ENCODE measurements at regions of chr6 and their contacts with region 1.

Region 1: GRCh38 chr6:127266178-127266891 is at the start of gene RNF146:
- DNase-seq: peak; percentile 90
- H3K4me3 ChIP-seq: peak within 1 kb of the TSS; percentile 92 to 99 (median 98)
- H3K27ac ChIP-seq: peak within 1 kb of the TSS; percentile 74
- H3K4me1 ChIP-seq: peaks cover 20% of the 10 kb centered on the region
- H3K27me3 ChIP-seq: no peaks in the 10 kb centered on the region
- CTCF ChIP-seq: peak; percentile 67 to 73
- POLR2A ChIP-seq: no peak
- total RNA-seq, gene RNF146: 43.8 and 48.1 TPM in 2 replicates

Region 2: GRCh38 chr6:125995972-125996580 is 1270.3 kb before region 1 on chr6:
- CTCF ChIA-PET with region 1: interaction called, 7 read pairs
- POLR2A ChIA-PET with region 1: no interaction called
- dilution Hi-C with region 1: no loop called
- intact Hi-C with region 1: loop called (anchors 5 kb)
- DNase-seq: peak; percentile 74
- H3K4me3 ChIP-seq: no peak overlapping the region
- H3K27ac ChIP-seq: no peak overlapping the region
- H3K4me1 ChIP-seq: no peaks in the 10 kb centered on the region
- H3K27me3 ChIP-seq: no peaks in the 10 kb centered on the region
- CTCF ChIP-seq: peak; percentile 84 to 97
- POLR2A ChIP-seq: no peak

Region 3: DNA sequence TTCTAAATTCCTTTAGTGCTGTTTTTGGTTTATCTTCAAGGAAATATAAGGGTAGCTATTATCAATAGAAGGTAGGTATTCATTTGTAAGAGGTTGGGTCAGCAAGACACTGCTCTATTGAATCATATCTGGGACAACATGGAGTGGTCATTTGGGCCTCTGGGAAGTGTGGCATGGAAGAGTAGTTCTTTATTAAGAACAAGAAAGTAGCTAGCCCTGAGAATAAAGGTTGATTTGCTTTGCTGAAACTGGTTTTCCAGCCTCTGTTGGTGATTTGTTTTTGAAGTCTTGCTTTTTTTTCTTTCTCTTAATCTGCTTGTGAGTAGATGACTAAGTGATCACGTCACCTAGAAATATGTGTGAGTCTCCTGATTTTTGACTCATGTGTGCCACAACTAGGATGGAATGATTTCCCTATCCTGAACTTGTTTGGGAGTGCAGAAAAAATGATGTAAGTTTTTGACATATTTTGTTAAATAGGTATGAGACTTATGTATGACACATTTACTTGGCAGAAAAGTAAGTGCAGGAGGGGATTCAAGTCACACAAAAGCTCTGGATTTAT is 544.7 kb before region 1 on chr6:
- CTCF ChIA-PET with region 1: no interaction called
- POLR2A ChIA-PET with region 1: no interaction called
- dilution Hi-C with region 1: no loop called
- intact Hi-C with region 1: loop called (anchors 1 kb)
- DNase-seq: peak; percentile 80
- H3K4me3 ChIP-seq: no peak overlapping the region
- H3K27ac ChIP-seq: peak overlapping the region; percentile 72
- H3K4me1 ChIP-seq: peaks cover 14% of the 10 kb centered on the region
- H3K27me3 ChIP-seq: no peaks in the 10 kb centered on the region
- CTCF ChIP-seq: no peak
- POLR2A ChIP-seq: no peak

Region 4: DNA sequence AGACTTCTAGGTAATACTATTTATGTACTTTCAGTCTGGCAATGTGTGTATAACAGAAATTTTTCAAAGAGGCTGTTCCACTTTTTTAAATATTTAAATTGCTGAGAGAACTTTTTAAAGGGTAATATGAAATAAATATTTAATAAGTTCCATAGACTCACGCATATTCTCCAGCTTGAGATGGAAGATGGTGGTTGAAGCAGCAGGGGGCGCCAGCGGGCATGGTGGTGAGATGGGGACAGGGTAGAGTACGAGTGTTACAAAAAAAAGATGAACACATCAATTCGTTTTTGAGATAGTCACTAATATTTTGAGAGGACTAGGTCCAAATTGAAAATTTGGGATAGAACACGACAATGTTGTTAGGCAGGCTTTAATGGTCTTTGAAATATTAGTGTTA is 79.4 kb before region 1 on chr6:
- CTCF ChIA-PET with region 1: interaction called, 115 read pairs
- POLR2A ChIA-PET with region 1: interaction called, 6 read pairs
- dilution Hi-C with region 1: no loop called
- intact Hi-C with region 1: loop called (anchors 2 kb)
- DNase-seq: no peak
- H3K4me3 ChIP-seq: no peak overlapping the region
- H3K27ac ChIP-seq: no peak overlapping the region
- H3K4me1 ChIP-seq: no peaks in the 10 kb centered on the region
- H3K27me3 ChIP-seq: no peaks in the 10 kb centered on the region
- CTCF ChIP-seq: peak in 1 of 2 donors; percentile 24
- POLR2A ChIP-seq: no peak

Region 5: GRCh38 chr6:127216810-127217789 is 49.2 kb before region 1 on chr6:
- CTCF ChIA-PET with region 1: interaction called, 12 read pairs
- POLR2A ChIA-PET with region 1: no interaction called
- dilution Hi-C with region 1: no loop called
- intact Hi-C with region 1: no loop called
- DNase-seq: peak; percentile 50
- H3K4me3 ChIP-seq: no peak overlapping the region
- H3K27ac ChIP-seq: no peak overlapping the region
- H3K4me1 ChIP-seq: peaks cover 14% of the 10 kb centered on the region
- H3K27me3 ChIP-seq: no peaks in the 10 kb centered on the region
- CTCF ChIP-seq: no peak
- POLR2A ChIP-seq: no peak

Region 6: GRCh38 chr6:127302728-127303660 is 36.7 kb after region 1 on chr6:
- CTCF ChIA-PET with region 1: interaction called, 17 read pairs
- POLR2A ChIA-PET with region 1: interaction called, 3 read pairs
- dilution Hi-C with region 1: no loop called
- intact Hi-C with region 1: loop called (anchors 2 kb)
- DNase-seq: peak; percentile 81
- H3K4me3 ChIP-seq: no peak overlapping the region
- H3K27ac ChIP-seq: no peak overlapping the region
- H3K4me1 ChIP-seq: peaks cover 29% of the 10 kb centered on the region
- H3K27me3 ChIP-seq: no peaks in the 10 kb centered on the region
- CTCF ChIP-seq: peak; percentile 43 to 54
- POLR2A ChIP-seq: no peak

Measured in endothelial cell of umbilical vein (primary cell).